ENCODE measurements at regions of chr2 and their contacts with region 1.

Region 1: DNA sequence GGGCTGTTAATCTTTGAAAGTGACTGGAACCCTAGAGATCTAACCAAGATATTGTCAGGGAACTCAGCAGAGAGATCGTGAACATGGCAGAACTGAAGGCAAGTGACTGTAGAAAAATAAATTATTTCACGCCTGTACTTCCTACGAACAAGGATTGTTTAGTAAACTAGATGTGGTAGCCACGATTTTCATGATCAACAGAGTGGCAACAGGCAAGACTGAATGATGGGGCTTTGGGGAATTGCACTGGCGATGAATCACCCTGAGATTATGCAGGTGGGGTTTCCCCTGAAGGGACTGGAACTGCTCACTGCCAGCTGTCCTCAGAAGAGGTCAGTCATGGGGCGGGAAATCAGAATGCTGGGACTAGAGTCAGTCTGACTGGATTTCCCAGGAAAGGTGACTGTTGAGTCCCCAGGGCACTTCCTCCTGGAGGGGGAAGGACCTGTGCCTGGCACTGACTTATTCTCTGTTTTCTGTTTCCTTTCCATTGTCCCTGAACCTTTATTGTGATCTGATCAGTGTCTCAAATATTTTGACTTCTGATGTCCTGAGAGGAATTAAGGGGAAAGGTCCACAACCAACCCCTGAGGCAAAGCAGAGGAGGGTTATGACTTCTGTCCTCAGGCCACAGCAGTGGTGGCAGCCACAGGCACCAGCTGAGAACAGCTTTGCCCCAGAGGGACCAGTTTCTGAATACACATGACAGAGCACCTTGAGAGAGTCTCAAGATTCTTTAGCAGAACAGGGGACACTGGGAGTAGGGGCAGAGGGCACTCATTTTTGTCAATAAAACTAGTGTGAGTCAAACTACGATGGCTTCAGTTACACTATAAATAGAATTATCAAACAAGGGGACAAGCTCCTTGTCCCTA is 70.0 kb downstream of the NAB1 start:
- DNase-seq: peak; percentile 81 to 96
- H3K4me3 ChIP-seq: no peak overlapping the region
- H3K27ac ChIP-seq: peak overlapping the region; percentile 90
- H3K4me1 ChIP-seq: peaks cover 27% of the 10 kb centered on the region
- H3K27me3 ChIP-seq: no peaks in the 10 kb centered on the region
- CTCF ChIP-seq: no peak

Region 2: DNA sequence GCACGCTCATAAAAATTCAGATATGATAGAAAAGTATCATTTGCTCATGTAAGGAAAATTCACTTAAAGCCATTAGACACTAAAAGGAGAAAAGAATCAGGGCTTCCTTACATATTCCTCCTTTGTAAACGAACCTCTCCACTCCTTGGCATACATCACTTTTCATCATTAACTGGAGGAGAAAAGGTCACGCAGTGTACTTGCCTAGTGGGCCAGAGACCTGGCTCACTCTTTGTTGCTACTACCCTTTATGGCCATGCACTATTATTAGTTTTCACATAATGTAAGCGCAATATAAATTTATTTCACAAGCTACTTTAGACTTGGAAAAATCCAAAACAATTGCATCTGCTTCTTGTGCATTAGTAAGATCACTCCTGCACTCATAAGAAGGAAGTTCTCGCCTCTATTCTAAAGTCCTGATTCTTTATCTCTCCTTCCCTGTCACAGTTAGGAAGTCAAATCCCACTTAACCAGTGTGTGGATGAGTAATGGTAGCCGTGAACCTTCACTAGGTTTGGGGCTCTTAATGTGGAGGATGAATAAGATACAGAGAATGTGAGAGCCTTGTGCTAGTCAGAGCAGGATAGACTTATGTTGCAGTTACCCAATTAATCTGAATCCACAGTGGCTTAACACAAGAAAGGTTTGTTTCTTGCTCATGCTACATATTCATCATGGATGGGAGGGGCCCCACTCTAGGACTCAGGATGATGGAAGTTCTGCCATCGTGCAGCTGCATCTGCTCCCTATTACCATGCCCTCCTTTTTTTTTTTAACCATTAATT is 46.7 kb after region 1 on chr2:
- CTCF ChIA-PET with region 1: no interaction called
- POLR2A ChIA-PET with region 1: no interaction called
- intact Hi-C with region 1: loop called (anchors 2 kb)
- DNase-seq: peak in 1 of 2 experiments; percentile 65
- H3K4me3 ChIP-seq: no peak overlapping the region
- H3K27ac ChIP-seq: no peak overlapping the region
- H3K4me1 ChIP-seq: peaks cover 14% of the 10 kb centered on the region
- H3K27me3 ChIP-seq: no peaks in the 10 kb centered on the region
- CTCF ChIP-seq: no peak

Region 3: DNA sequence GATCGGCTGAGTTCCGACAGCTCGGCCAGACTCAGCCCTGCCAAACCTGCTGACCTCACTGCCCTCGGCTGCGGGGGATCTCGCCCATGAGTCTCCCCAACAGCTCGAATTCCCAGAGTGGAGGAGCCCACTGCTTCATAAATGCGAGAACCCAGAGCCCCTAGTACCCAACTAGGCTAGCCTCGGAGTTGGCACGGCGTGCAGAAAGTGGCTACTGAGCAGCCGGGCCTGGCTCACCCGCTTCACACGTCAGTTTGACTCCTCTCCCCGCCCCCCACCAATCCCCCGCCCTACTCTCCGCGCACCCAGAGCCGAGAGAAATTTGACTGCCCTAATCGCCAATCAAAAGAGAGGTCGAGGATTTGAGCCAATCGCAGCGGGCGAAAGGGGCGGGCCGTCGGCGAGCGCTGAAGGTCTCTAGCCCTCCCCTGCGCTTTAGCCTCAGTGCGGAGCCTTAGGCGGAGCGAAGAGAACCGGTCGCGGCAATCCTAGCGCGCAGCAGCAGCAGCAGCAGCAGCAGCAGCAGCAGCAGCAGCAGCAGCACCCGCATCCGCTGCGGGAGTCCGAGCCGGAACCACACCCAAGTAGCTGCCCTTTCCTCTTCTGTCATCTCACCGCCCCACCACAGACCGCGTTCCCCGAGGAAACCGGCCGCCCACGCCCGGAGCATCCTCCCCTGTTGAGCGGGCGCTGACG is 161.6 kb after region 1 on chr2 and contains the start of gene GLS:
- CTCF ChIA-PET with region 1: no interaction called
- POLR2A ChIA-PET with region 1: no interaction called
- intact Hi-C with region 1: no loop called
- DNase-seq: peak; percentile 89
- H3K4me3 ChIP-seq: peak within 1 kb of the TSS; percentile 93
- H3K27ac ChIP-seq: peak within 1 kb of the TSS; percentile 80
- H3K4me1 ChIP-seq: peaks cover 31% of the 10 kb centered on the region
- H3K27me3 ChIP-seq: no peaks in the 10 kb centered on the region
- CTCF ChIP-seq: no peak
- total RNA-seq, gene GLS: 66.4 and 68.5 TPM in 2 replicates

Region 4: GRCh38 chr2:190996338-190996946 is 277.6 kb after region 1 on chr2:
- CTCF ChIA-PET with region 1: no interaction called
- POLR2A ChIA-PET with region 1: no interaction called
- intact Hi-C with region 1: no loop called
- DNase-seq: peak in 1 of 2 experiments; percentile 17
- H3K4me3 ChIP-seq: no peak overlapping the region
- H3K27ac ChIP-seq: no peak overlapping the region
- H3K4me1 ChIP-seq: no peaks in the 10 kb centered on the region
- H3K27me3 ChIP-seq: no peaks in the 10 kb centered on the region
- CTCF ChIP-seq: peak; percentile 65